ENCODE measurements at regions of chr1 and their contacts with region 1.

Region 1: GRCh38 chr1:25774921-25775801 is 24.8 kb upstream of the SELENON start:
- DNase-seq: peak; percentile 60 to 96 (median 84)
- ATAC-seq: peak; percentile 86
- H3K4me3 ChIP-seq: peak overlapping the region in 1 of 2 experiments; percentile 59
- H3K4me3 Mint-ChIP-seq: peak overlapping the region; percentile 83
- H3K27ac ChIP-seq: peak overlapping the region; percentile 44 to 92
- H3K27ac Mint-ChIP-seq: peak overlapping the region; percentile 99
- H3K4me1 ChIP-seq: peaks cover 63% of the 10 kb centered on the region
- H3K4me1 Mint-ChIP-seq: peaks cover 76% of the 10 kb centered on the region
- H3K27me3 ChIP-seq: no peaks in the 10 kb centered on the region
- H3K27me3 Mint-ChIP-seq: no peaks in the 10 kb centered on the region
- CTCF ChIP-seq: no peak

Region 2: DNA sequence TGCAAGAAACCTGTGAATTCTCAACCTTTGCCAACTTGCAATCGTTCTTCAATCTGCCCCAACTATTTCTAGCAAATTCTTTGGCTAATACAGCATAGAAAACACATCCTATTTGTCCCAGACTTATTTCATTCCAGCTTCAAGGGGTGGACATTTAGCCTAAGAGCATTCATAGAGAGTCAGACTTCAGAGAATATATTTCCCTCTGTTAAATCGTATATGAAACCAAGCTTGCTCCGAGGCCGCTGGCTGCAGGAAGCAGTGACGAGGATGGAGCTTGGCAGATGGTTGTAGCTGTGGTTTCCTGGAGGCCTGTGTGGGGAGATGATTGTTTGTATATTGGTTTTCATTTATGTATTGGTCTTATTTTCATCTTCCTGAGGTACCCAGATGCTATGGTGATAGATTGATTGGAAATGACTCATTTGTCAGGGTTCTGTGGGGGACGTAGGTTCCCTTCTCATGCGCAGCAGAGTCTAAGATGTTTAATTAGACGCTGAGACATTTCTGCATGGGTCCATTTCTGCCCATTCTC is 132.5 kb before region 1 on chr1:
- CTCF ChIA-PET with region 1: no interaction called
- POLR2A ChIA-PET with region 1: interaction called, 5 read pairs
- intact Hi-C with region 1: loop called in 1 of 2 experiments (anchors 1 kb)
- DNase-seq: peak; percentile 53 to 90 (median 74)
- ATAC-seq: peak; percentile 84
- H3K4me3 ChIP-seq: peak overlapping the region; percentile 7 to 14
- H3K4me3 Mint-ChIP-seq: peak overlapping the region; percentile 74
- H3K27ac ChIP-seq: peak overlapping the region; percentile 51 to 57
- H3K27ac Mint-ChIP-seq: peak overlapping the region; percentile 95
- H3K4me1 ChIP-seq: peaks cover 57% of the 10 kb centered on the region
- H3K4me1 Mint-ChIP-seq: peaks cover 77% of the 10 kb centered on the region
- H3K27me3 ChIP-seq: no peaks in the 10 kb centered on the region
- H3K27me3 Mint-ChIP-seq: no peaks in the 10 kb centered on the region
- CTCF ChIP-seq: no peak

Region 3: GRCh38 chr1:25711555-25712298 is 63.4 kb before region 1 on chr1:
- CTCF ChIA-PET with region 1: interaction called, 3 read pairs
- POLR2A ChIA-PET with region 1: interaction called, 3 read pairs
- intact Hi-C with region 1: loop called in 1 of 2 experiments (anchors 2 kb)
- DNase-seq: peak in 8 of 9 experiments; percentile 27 to 77 (median 58)
- ATAC-seq: peak; percentile 83
- H3K4me3 ChIP-seq: no peak overlapping the region
- H3K4me3 Mint-ChIP-seq: peak overlapping the region; percentile 37
- H3K27ac ChIP-seq: no peak overlapping the region
- H3K27ac Mint-ChIP-seq: peak overlapping the region; percentile 87
- H3K4me1 ChIP-seq: peaks cover 42% of the 10 kb centered on the region
- H3K4me1 Mint-ChIP-seq: peaks cover 71% of the 10 kb centered on the region
- H3K27me3 ChIP-seq: no peaks in the 10 kb centered on the region
- H3K27me3 Mint-ChIP-seq: no peaks in the 10 kb centered on the region
- CTCF ChIP-seq: no peak

Region 4: DNA sequence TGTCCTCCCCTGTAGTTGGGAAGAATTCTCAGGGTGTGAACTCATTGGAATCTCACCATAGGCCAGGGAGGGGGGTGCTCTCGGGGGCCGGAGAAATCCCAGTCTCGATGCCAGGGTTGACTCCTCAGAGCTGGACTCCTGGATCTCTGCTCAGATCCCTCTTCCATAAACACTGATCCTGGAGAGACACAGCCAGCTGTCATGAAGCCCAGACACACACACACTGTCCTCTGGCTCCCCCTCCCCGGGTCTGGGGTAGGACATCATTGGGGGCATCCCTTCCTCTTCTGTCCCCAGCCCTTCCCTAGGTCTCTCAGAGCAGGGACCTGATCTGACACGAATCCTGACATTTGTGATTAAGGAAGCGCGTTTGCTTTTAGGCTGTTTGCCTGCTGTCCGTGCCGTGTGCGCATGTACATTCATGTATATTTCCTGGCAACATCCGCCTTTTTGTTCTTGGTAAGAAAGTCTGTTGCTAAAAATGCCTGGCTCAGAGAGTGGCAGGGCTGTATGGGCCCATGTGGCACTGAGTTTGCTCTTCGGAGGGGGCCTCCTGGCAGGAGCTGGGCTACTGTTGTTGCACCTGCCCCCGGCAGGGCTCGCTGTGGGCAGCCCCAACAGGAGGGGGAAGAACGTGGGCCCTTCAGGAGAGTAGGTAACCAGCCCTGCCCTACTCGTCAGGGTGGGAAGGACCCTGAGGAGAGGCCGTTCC is 20.5 kb before region 1 on chr1:
- CTCF ChIA-PET with region 1: interaction called, 5 read pairs
- POLR2A ChIA-PET with region 1: interaction called, 16 read pairs
- intact Hi-C with region 1: loop called (anchors 1 to 2 kb)
- DNase-seq: peak in 6 of 9 experiments; percentile 33 to 74 (median 54)
- ATAC-seq: peak; percentile 95
- H3K4me3 ChIP-seq: no peak overlapping the region
- H3K4me3 Mint-ChIP-seq: peak overlapping the region; percentile 56
- H3K27ac ChIP-seq: peak overlapping the region; percentile 14 to 19
- H3K27ac Mint-ChIP-seq: peak overlapping the region; percentile 95
- H3K4me1 ChIP-seq: peaks cover 36% of the 10 kb centered on the region
- H3K4me1 Mint-ChIP-seq: peaks cover 48% of the 10 kb centered on the region
- H3K27me3 ChIP-seq: no peaks in the 10 kb centered on the region
- H3K27me3 Mint-ChIP-seq: no peaks in the 10 kb centered on the region
- CTCF ChIP-seq: peak; percentile 29

Region 5: DNA sequence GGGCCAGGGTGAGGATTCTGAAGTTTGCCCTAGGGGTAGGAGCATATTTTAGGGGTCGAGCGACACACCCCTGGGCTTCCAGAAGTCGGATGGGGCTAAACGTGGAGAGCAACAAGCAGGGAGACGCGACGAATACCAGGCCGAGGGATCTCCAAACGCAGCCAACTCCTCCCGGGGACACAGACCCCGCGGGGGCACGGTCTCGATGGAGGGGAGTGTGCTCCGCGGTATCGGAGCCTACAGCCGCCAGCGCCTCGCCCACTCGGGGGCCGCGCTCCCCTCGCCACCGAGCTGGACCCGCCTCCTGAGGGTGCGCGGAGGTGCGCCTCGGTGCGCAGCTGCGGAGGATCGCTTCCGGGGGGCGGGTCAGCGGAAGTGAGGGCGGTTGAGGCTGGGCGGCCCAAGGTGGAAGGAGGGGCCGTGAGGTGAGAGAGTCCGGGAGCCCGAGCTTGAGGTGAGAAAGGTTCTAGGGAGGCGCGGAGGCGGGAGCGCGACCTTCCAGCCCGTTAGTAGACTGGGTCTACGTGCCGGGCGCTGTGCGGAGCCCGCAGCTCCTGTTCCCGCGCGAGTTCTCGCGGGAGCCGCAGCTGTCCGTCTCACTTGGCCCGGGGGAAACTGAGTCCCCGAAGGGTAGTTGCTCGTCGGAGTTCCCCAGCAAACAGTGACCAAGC is 44.5 kb after region 1 on chr1 and contains the start of gene MTFR1L:
- CTCF ChIA-PET with region 1: no interaction called
- POLR2A ChIA-PET with region 1: interaction called, 5 read pairs
- intact Hi-C with region 1: loop called in 1 of 2 experiments (anchors 1 kb)
- DNase-seq: peak; percentile 78 to 96 (median 94)
- ATAC-seq: peak; percentile 87
- H3K4me3 ChIP-seq: peak within 1 kb of the TSS; percentile 74 to 95
- H3K4me3 Mint-ChIP-seq: peak within 1 kb of the TSS; percentile 94
- H3K27ac ChIP-seq: peak within 1 kb of the TSS; percentile 65 to 77
- H3K27ac Mint-ChIP-seq: peak within 1 kb of the TSS; percentile 97
- H3K4me1 ChIP-seq: peaks cover 20% of the 10 kb centered on the region
- H3K4me1 Mint-ChIP-seq: peaks cover 35% of the 10 kb centered on the region
- H3K27me3 ChIP-seq: no peaks in the 10 kb centered on the region
- H3K27me3 Mint-ChIP-seq: no peaks in the 10 kb centered on the region
- CTCF ChIP-seq: no peak
- total RNA-seq, gene MTFR1L: 22.9 to 25.7 TPM

Measured in CD8-positive, alpha-beta T cell (primary cell).